ENCODE measurements at regions of chr21 and their contacts with region 1.

Region 1: DNA sequence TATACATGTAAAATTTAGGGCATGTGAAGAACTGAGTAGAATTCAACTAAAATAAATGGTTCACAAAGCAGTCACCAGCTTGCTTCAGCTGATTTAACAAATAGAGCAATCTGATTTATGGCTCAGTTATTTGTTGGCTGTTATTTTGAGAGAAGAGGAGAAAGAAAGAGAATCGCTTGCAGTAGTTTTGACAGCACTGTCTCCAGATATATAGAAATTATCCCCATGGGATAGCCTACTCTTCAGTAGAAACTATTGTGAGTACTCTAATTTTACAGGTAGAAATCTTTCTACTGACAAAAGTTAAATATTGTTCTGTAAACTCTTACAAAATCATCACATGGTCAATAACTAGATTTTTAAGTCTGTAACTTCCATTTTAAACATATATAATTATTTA is 1098.2 kb downstream of the MRPL39 start:
- DNase-seq: no peak
- ATAC-seq: no peak
- H3K4me3 ChIP-seq: no peak overlapping the region
- H3K4me3 Mint-ChIP-seq: no peak overlapping the region
- H3K27ac ChIP-seq: no peak overlapping the region
- H3K27ac Mint-ChIP-seq: no peak overlapping the region
- H3K4me1 ChIP-seq: no peaks in the 10 kb centered on the region
- H3K4me1 Mint-ChIP-seq: no peaks in the 10 kb centered on the region
- H3K27me3 ChIP-seq: no peaks in the 10 kb centered on the region
- H3K27me3 Mint-ChIP-seq: no peaks in the 10 kb centered on the region

Region 2: DNA sequence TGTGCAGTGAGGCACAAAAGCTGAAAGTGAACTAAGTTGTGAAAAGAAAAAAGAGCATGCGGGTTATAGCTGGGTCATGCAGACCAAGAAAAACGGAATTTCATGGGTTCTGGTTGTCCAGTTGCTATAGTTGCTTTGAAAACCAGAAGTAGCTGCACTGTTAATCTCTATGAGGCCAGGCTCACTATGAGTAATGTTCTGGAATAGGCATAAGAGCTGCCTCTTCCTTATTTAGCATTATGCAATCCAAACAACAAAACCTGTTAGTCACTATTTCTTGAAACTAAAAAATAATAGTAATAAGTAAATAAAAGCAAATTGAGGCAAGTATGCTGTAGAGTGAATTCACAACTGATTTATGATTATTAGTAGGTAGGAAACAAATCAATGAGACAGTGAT is 285.5 kb before region 1 on chr21:
- CTCF ChIA-PET with region 1: no interaction called
- POLR2A ChIA-PET with region 1: no interaction called
- intact Hi-C with region 1: no loop called
- DNase-seq: no peak
- ATAC-seq: no peak
- H3K4me3 ChIP-seq: no peak overlapping the region
- H3K4me3 Mint-ChIP-seq: no peak overlapping the region
- H3K27ac ChIP-seq: no peak overlapping the region
- H3K27ac Mint-ChIP-seq: no peak overlapping the region
- H3K4me1 ChIP-seq: no peaks in the 10 kb centered on the region
- H3K4me1 Mint-ChIP-seq: no peaks in the 10 kb centered on the region
- H3K27me3 ChIP-seq: peaks cover 0 to 2% of the 10 kb centered on the region in 2 donors
- H3K27me3 Mint-ChIP-seq: no peaks in the 10 kb centered on the region

Region 3: GRCh38 chr21:24444736-24445135 is 64.4 kb before region 1 on chr21:
- CTCF ChIA-PET with region 1: no interaction called
- POLR2A ChIA-PET with region 1: no interaction called
- intact Hi-C with region 1: loop called in 1 of 2 experiments (anchors 10 kb)
- DNase-seq: no peak
- ATAC-seq: no peak
- H3K4me3 ChIP-seq: no peak overlapping the region
- H3K4me3 Mint-ChIP-seq: no peak overlapping the region
- H3K27ac ChIP-seq: no peak overlapping the region
- H3K27ac Mint-ChIP-seq: no peak overlapping the region
- H3K4me1 ChIP-seq: no peaks in the 10 kb centered on the region
- H3K4me1 Mint-ChIP-seq: peaks cover 0 to 3% (median 0%) of the 10 kb centered on the region in 7 donors
- H3K27me3 ChIP-seq: no peaks in the 10 kb centered on the region
- H3K27me3 Mint-ChIP-seq: no peaks in the 10 kb centered on the region

Region 4: DNA sequence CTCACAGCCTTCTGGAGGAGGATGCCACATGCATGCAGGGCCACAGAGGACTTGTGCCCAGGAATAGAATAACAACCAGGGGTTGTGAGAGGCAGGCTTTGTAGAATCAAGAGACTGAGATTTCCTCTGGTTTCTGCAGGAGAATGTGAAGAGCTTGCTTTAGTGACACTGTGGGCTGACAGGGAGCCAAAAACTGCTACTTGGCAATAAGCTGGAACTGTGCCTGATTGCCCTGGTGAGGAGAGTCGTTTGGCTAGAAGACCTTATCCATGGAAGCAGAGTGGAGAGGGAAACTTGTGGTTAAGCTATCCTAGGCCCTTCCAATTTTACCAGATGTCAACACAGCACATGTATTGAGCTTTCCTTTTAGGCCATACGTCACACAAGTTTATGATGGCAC is 196.1 kb after region 1 on chr21:
- CTCF ChIA-PET with region 1: no interaction called
- POLR2A ChIA-PET with region 1: no interaction called
- intact Hi-C with region 1: no loop called
- DNase-seq: no peak
- ATAC-seq: no peak
- H3K4me3 ChIP-seq: no peak overlapping the region
- H3K4me3 Mint-ChIP-seq: no peak overlapping the region
- H3K27ac ChIP-seq: no peak overlapping the region
- H3K27ac Mint-ChIP-seq: no peak overlapping the region
- H3K4me1 ChIP-seq: no peaks in the 10 kb centered on the region
- H3K4me1 Mint-ChIP-seq: no peaks in the 10 kb centered on the region
- H3K27me3 ChIP-seq: no peaks in the 10 kb centered on the region
- H3K27me3 Mint-ChIP-seq: no peaks in the 10 kb centered on the region

Measured in naive thymus-derived CD4-positive, alpha-beta T cell (primary cell).